CD14-positive monocyte (primary cell): ENCODE measurements at regions of chr5 and their contacts with region 1.

Region 1: GRCh38 chr5:133111299-133111698 is 59.5 kb downstream of the HSPA4 start:
- DNase-seq: peak; percentile 57 to 72 (median 63)
- H3K4me3 ChIP-seq: no peak overlapping the region
- H3K4me3 Mint-ChIP-seq: no peak overlapping the region
- H3K27ac ChIP-seq: no peak overlapping the region
- H3K27ac Mint-ChIP-seq: peak overlapping the region in 1 of 7 donors; percentile 65
- H3K4me1 ChIP-seq: peaks cover 0 to 3% of the 10 kb centered on the region in 2 donors
- H3K4me1 Mint-ChIP-seq: peaks cover 14% of the 10 kb centered on the region
- H3K27me3 ChIP-seq: no peaks in the 10 kb centered on the region
- H3K27me3 Mint-ChIP-seq: peaks cover 2 to 8% (median 7%) of the 10 kb centered on the region in 3 donors
- CTCF ChIP-seq: peak; percentile 89

Region 2: DNA sequence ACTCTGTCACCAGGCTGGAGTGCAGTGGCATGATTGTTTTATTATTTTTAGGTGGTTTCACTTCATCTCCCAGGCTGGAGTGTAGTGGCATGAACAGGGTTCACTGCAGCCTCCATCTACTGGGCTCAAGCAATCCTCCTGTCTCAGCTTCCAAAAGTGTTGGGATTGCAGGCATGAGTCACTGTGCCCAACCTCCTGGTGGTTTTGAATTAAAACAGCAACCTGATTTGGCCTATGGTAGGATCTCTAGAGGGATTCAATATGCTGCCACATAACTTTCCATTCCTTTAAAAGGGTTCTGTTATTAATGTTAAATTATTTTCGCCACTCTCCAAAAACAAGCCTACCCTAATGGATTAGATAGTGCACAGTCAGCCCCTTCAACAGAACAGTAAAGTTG is 69.4 kb before region 1 on chr5:
- intact Hi-C with region 1: no loop called
- DNase-seq: no peak
- H3K4me3 ChIP-seq: no peak overlapping the region
- H3K4me3 Mint-ChIP-seq: no peak overlapping the region
- H3K27ac ChIP-seq: no peak overlapping the region
- H3K27ac Mint-ChIP-seq: no peak overlapping the region
- H3K4me1 ChIP-seq: no peaks in the 10 kb centered on the region
- H3K4me1 Mint-ChIP-seq: peaks cover 3% of the 10 kb centered on the region
- H3K27me3 ChIP-seq: no peaks in the 10 kb centered on the region
- H3K27me3 Mint-ChIP-seq: peaks cover 0 to 5% (median 0%) of the 10 kb centered on the region in 3 donors
- CTCF ChIP-seq: no peak

Region 3: DNA sequence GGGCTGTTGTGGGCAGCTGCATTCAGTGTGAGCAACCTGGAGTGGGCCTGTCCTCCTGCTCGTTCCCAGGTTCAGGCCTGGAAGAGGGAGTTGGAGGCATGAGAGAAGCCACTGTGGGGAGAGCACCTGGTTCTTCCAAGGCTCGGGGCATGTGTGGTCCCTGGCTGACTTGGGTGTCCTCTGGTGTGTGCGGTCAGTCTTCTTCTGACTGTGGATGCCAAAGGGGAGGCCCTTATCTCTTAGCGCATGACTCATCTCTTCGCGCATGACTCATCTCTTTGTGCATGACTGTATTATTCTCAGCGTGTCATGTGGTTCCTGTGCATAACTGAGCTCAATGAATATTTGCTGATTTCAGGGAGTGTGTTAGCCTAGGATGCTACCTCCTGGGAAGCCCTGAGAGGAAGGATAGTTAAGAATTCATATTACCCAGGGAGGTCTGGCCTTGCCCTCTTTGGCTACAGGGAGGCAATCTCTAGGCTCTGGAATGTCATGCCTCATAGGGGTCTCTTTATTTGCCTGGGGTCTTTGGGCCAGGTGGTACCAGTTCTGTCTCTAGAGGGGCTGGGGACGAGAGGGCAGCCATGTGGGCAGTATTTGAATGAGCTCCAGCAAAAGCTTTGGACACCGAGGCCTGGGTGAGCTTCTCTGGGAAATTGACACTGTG is 129.3 kb after region 1 on chr5:
- intact Hi-C with region 1: loop called in 1 of 2 experiments (anchors 10 kb)
- DNase-seq: peak; percentile 47 to 87 (median 81)
- H3K4me3 ChIP-seq: no peak overlapping the region
- H3K4me3 Mint-ChIP-seq: no peak overlapping the region
- H3K27ac ChIP-seq: peak overlapping the region in 1 of 2 donors; percentile 27
- H3K27ac Mint-ChIP-seq: peak overlapping the region; percentile 74 to 95 (median 90)
- H3K4me1 ChIP-seq: peaks cover 13 to 16% of the 10 kb centered on the region in 2 donors
- H3K4me1 Mint-ChIP-seq: peaks cover 20% of the 10 kb centered on the region
- H3K27me3 ChIP-seq: no peaks in the 10 kb centered on the region
- H3K27me3 Mint-ChIP-seq: peaks cover 0 to 4% (median 4%) of the 10 kb centered on the region in 3 donors
- CTCF ChIP-seq: no peak

Region 4: DNA sequence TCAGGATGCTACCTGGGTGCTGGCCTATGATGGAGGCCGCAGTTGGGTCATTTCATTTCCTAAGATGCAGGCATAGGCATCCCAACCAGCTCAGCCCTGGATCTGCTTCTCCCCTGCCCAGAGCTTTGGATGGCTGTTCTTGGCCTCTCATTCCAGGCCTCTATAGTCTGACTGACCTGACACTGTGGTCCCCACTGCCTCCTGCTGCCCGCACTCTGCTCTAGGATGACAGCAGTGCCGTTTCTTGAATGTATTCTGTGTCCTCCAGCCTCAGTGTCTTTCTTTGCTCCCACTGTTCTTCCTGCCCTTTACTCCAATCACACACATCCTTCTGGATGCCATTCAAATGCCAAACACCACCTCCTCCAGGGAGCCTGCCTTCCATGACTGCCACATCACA is 176.2 kb after region 1 on chr5:
- intact Hi-C with region 1: loop called in 1 of 2 experiments (anchors 5 kb)
- DNase-seq: no peak
- H3K4me3 ChIP-seq: no peak overlapping the region
- H3K4me3 Mint-ChIP-seq: no peak overlapping the region
- H3K27ac ChIP-seq: no peak overlapping the region
- H3K27ac Mint-ChIP-seq: no peak overlapping the region
- H3K4me1 ChIP-seq: no peaks in the 10 kb centered on the region
- H3K4me1 Mint-ChIP-seq: no peaks in the 10 kb centered on the region
- H3K27me3 ChIP-seq: no peaks in the 10 kb centered on the region
- H3K27me3 Mint-ChIP-seq: peaks cover 0 to 2% (median 1%) of the 10 kb centered on the region in 3 donors
- CTCF ChIP-seq: no peak

Region 5: GRCh38 chr5:133868946-133869518 is 757.7 kb after region 1 on chr5:
- intact Hi-C with region 1: loop called in 1 of 2 experiments (anchors 10 kb)
- DNase-seq: peak; percentile 15 to 65 (median 25)
- H3K4me3 ChIP-seq: no peak overlapping the region
- H3K4me3 Mint-ChIP-seq: no peak overlapping the region
- H3K27ac ChIP-seq: no peak overlapping the region
- H3K27ac Mint-ChIP-seq: no peak overlapping the region
- H3K4me1 ChIP-seq: no peaks in the 10 kb centered on the region
- H3K4me1 Mint-ChIP-seq: peaks cover 5% of the 10 kb centered on the region
- H3K27me3 ChIP-seq: peaks cover 0 to 2% of the 10 kb centered on the region in 2 donors
- H3K27me3 Mint-ChIP-seq: peaks cover 7 to 18% (median 9%) of the 10 kb centered on the region in 3 donors
- CTCF ChIP-seq: peak; percentile 77